ENCODE measurements at regions of chr6 and their contacts with region 1.

Region 1: DNA sequence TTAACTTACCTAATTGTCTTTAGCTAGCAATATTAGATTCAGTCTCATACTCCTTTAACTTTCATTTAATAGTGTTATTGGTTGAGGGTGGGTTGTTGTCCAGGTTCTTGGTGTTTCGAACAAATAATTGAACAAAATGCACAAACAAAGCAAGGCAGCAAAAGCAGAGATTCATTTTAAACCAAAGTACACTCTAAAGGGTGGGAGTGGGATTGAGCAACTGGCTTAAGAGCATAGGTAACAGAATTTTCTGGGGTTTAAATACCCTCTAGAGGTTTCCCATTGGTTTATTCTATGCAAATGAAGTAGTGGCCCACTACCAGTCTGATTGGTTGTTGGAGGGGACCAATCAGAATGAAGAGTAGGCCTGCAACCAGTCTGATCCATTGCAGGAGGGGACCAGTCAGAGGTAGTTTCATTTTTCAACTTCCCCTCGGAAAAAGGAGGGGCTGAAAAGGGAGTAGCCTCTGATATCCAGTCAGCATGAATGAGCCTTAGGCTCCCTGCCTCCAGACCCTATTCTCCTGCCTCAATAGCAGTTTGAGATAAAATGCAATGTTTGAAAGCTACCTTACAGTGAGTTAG is 26.3 kb upstream of the RAB23 start:
- DNase-seq: no peak
- H3K4me3 ChIP-seq: no peak overlapping the region
- CTCF ChIP-seq: no peak

Region 2: DNA sequence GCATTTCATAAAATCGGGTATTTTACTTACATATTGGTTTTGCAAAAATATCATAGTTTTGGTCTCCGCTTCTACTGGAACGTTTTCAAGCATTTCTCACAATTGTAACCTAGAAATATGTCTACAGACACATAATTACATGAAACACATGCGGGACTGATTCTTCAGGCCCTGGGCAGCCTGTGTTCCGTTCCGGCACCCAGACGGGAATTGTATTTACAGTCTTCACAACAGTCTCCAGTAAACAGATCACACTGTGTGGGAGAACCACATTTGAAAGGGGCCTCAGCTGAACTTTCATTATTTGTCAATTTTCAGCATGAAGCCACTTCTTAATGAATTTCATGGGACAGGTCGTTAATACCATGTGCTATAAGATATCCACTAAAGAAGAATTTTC is 802.6 kb before region 1 on chr6:
- in situ Hi-C with region 1: no loop called
- DNase-seq: no peak
- H3K4me3 ChIP-seq: no peak overlapping the region
- CTCF ChIP-seq: no peak

Region 3: GRCh38 chr6:57190140-57190539 is 58.3 kb before region 1 on chr6:
- in situ Hi-C with region 1: loop called (anchors 5 kb)
- DNase-seq: no peak
- H3K4me3 ChIP-seq: no peak overlapping the region
- CTCF ChIP-seq: peak; percentile 40